ENCODE measurements at regions of chr3 and their contacts with region 1.

Region 1: GRCh38 chr3:51799879-51800749 is 21.1 kb upstream of the IQCF6 start:
- DNase-seq: peak; percentile 74
- H3K4me3 ChIP-seq: no peak overlapping the region
- H3K27ac ChIP-seq: no peak overlapping the region
- H3K4me1 ChIP-seq: no peaks in the 10 kb centered on the region
- H3K27me3 ChIP-seq: peaks cover 20 to 29% of the 10 kb centered on the region in 2 experiments
- CTCF ChIP-seq: peak; percentile 64 to 65
- POLR2A ChIP-seq: no peak

Region 2: DNA sequence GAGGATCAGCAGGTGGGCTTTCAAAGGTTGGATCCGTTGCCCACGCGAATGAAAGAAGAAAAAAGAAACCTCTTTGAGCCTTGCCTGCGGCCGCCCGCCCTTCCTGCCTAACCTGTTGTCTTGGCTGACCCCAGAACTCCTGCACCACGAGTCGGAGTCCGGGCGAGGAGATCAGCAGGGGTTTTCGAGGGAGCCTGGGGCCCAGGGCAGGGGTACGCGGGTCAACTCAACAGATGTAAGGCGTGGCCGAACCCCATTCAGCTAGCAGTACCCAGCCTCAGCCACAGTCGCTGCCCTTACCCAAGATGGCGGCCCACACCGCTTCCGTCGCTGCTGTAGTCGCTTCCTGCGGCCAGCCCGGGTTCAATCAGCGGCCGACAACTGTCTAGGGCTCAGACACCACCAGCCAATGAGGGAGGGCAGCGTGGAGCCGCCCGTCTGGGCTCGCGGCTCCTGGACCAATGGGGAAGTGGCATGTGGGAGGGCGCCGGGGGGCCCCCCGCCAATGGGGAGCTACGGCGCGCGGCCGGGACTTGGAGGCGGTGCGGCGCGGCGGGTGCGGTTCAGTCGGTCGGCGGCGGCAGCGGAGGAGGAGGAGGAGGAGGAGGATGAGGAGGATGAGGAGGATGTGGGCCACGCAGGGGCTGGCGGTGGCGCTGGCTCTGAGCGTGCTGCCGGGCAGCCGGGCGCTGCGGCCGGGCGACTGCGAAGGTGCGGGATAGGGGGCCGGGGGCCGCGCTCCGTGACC is 415.2 kb before region 1 on chr3 and contains the start of gene MANF:
- CTCF ChIA-PET with region 1: interaction called, 6 read pairs
- POLR2A ChIA-PET with region 1: no interaction called
- dilution Hi-C with region 1: no loop called
- intact Hi-C with region 1: loop called (anchors 1 kb)
- DNase-seq: peak; percentile 99
- H3K4me3 ChIP-seq: peak within 1 kb of the TSS; percentile 64 to 97 (median 93)
- H3K27ac ChIP-seq: peak within 1 kb of the TSS; percentile 95
- H3K4me1 ChIP-seq: peaks cover 29% of the 10 kb centered on the region
- H3K27me3 ChIP-seq: no peaks in the 10 kb centered on the region
- CTCF ChIP-seq: no peak
- POLR2A ChIP-seq: peak; percentile 89
- total RNA-seq, gene MANF: 248 and 254 TPM in 2 replicates

Region 3: DNA sequence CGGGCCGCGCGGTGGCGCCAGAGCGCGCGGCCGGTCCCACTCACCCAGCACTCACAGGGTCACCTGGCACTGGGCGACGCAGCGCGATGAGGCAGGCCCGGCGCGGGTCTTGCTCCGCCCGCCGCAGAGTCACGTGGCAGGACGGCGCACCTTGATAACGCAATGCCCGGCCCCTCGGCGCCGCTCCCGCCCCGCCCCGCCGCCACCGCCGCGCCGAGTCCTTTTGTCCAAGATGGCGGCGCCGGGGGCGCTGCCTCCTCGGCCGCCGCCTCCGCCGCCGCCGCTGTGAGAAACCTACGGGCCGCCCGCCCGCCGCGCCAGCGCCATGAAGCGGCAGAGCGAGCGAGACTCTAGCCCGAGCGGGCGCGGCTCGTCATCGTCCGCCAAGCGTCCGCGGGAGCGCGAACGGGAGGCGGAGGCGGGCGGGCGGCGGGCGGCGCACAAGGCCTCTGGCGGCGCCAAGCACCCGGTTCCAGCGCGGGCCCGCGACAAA is 409.0 kb before region 1 on chr3 and contains the start of gene RBM15B:
- CTCF ChIA-PET with region 1: interaction called, 6 read pairs
- POLR2A ChIA-PET with region 1: no interaction called
- dilution Hi-C with region 1: no loop called
- intact Hi-C with region 1: loop called (anchors 2 kb)
- DNase-seq: peak; percentile 96
- H3K4me3 ChIP-seq: peak within 1 kb of the TSS; percentile 29 to 77 (median 36)
- H3K27ac ChIP-seq: peak within 1 kb of the TSS; percentile 50
- H3K4me1 ChIP-seq: peaks cover 49% of the 10 kb centered on the region
- H3K27me3 ChIP-seq: no peaks in the 10 kb centered on the region
- CTCF ChIP-seq: peak in 1 of 2 donors; percentile 91
- POLR2A ChIP-seq: peak; percentile 75
- total RNA-seq, gene RBM15B: 38.3 and 39.1 TPM in 2 replicates

Region 4: GRCh38 chr3:51718547-51719409 is 81.3 kb before region 1 on chr3:
- CTCF ChIA-PET with region 1: interaction called, 20 read pairs
- POLR2A ChIA-PET with region 1: no interaction called
- dilution Hi-C with region 1: no loop called
- intact Hi-C with region 1: loop called (anchors 1 kb)
- DNase-seq: peak; percentile 30
- H3K4me3 ChIP-seq: no peak overlapping the region
- H3K27ac ChIP-seq: no peak overlapping the region
- H3K4me1 ChIP-seq: no peaks in the 10 kb centered on the region
- H3K27me3 ChIP-seq: no peaks in the 10 kb centered on the region
- CTCF ChIP-seq: peak; percentile 54 to 84
- POLR2A ChIP-seq: no peak

Region 5: DNA sequence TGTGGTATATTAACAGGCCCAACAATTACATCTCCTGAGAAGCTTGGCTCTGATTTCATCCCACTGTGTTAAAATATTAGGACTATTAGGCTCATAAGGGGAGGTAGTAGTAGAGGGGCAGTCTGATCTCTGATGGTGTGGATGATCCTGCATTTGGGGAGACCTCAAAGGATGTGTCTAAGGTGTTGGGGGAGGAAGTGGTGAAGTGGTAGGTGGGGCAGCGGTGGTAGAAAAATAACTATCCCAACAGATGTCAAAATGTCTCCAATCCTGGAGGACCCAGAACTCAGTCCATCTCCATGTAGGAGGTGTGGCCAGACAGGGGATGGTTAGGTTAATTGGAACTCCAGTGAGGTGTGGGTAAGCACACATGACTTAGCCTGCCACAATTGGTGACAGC is 10.7 kb before region 1 on chr3:
- CTCF ChIA-PET with region 1: interaction called, 11 read pairs
- POLR2A ChIA-PET with region 1: no interaction called
- dilution Hi-C with region 1: no loop called
- intact Hi-C with region 1: no loop called
- DNase-seq: no peak
- H3K4me3 ChIP-seq: no peak overlapping the region
- H3K27ac ChIP-seq: no peak overlapping the region
- H3K4me1 ChIP-seq: no peaks in the 10 kb centered on the region
- H3K27me3 ChIP-seq: peaks cover 0 to 3% of the 10 kb centered on the region in 2 experiments
- CTCF ChIP-seq: no peak
- POLR2A ChIP-seq: no peak